Activated CD4-positive, alpha-beta T cell treated with anti-CD3 and anti-CD28 coated beads, Interleukin-2, amount 10 ng/mL, durations not matched to agents 24 days and 14 days (primary cell): ENCODE measurements at regions of chr1 and their contacts with region 1.

Region 1: DNA sequence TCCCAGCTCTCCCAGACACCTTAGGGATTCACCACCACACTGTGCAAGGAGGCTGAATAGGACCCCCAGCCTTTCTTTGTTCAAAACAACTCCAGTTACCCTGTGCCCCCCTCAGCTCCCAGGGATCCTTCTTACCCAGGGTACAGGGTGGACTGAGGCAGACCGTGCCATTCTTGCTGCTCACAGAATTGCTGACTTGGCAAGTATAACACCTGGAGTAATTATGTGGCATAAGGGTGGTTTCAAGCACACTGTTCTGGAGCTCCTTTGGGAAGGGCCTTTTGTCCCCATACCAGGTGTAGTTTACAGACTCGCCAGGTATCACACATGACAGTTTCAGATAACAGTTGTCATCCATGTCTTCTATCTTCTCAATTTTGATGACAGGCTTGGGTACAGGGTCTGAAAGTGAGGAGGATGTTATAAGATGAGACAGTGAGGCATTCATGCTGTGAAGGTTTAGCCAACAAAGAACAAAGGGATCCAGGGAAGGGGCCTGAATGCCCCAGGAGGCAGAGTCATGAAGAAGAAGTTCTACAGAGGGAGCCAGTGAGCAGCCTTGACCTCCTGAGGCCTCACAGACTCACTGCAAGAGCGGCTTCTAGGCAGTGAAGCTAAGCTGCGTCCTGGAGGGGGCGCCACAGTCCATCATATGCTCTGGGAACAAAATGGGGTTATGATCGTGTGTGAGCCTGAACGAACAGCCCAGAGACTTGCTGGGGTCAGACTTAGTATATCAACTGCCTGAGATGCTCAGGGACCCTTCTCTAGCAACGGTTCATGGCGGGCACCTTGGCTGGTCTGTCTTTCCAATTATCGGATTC is 30.3 kb downstream of the CD48 start:
- DNase-seq: peak; percentile 95
- H3K4me3 Mint-ChIP-seq: no peak overlapping the region
- H3K27ac Mint-ChIP-seq: peak overlapping the region; percentile 77
- H3K4me1 Mint-ChIP-seq: peaks cover 82% of the 10 kb centered on the region
- H3K27me3 Mint-ChIP-seq: no peaks in the 10 kb centered on the region

Region 2: DNA sequence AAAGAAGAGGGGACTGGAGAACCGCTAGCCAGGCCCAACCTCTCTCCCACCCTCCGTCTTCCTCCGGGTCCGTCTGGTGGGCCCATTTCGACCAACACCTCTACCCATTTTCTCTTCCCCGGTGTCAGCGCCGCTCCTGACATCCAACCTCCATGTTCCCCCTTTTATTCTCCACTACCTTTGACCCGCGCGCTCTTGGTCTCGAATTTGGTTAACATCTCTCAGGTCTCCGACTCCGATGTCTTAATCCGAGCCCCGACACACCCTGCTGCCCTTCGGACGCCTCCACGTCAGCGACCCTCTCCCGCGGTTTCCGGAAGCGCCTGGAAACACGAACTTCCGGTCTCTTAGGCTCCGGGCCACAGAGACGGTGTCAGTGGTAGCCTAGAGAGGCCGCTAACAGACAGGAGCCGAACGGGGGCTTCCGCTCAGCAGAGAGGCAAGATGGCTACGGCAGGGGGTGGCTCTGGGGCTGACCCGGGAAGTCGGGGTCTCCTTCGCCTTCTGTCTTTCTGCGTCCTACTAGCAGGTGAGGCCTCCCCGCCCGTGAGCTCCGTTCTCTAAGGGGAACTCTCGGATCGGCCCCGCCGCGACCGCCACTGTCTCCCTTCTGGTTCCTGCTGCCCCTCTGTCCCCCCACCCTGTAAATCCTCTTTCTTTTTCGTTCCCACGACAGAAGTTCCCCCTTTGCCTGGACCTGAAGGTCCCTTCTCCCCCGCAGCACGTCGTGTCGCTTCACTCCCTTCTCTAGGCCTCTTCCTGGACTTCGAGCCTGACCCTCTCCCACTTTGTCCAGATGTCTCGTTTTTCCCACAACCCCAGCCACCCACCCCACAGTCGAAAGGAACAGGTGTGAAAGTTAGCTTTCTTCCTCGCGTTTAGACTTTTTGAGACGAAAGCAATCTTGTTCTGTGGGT is 338.1 kb before region 1 on chr1 and contains the starts of genes COPA and NCSTN:
- intact Hi-C with region 1: loop called (anchors 5 kb)
- DNase-seq: peak; percentile 97
- H3K4me3 Mint-ChIP-seq: peak within 1 kb of the TSS; percentile 96
- H3K27ac Mint-ChIP-seq: peak within 1 kb of the TSS; percentile 97
- H3K4me1 Mint-ChIP-seq: peaks cover 41% of the 10 kb centered on the region
- H3K27me3 Mint-ChIP-seq: no peaks in the 10 kb centered on the region
- total RNA-seq, gene COPA: 116 and 125 TPM in 2 replicates
- total RNA-seq, gene NCSTN: 73.6 and 81.1 TPM in 2 replicates

Region 3: GRCh38 chr1:160726498-160727315 is 45.4 kb after region 1 on chr1:
- intact Hi-C with region 1: loop called (anchors 1 kb)
- DNase-seq: peak; percentile 90
- H3K4me3 Mint-ChIP-seq: no peak overlapping the region
- H3K27ac Mint-ChIP-seq: no peak overlapping the region
- H3K4me1 Mint-ChIP-seq: peaks cover 22% of the 10 kb centered on the region
- H3K27me3 Mint-ChIP-seq: no peaks in the 10 kb centered on the region

Region 4: DNA sequence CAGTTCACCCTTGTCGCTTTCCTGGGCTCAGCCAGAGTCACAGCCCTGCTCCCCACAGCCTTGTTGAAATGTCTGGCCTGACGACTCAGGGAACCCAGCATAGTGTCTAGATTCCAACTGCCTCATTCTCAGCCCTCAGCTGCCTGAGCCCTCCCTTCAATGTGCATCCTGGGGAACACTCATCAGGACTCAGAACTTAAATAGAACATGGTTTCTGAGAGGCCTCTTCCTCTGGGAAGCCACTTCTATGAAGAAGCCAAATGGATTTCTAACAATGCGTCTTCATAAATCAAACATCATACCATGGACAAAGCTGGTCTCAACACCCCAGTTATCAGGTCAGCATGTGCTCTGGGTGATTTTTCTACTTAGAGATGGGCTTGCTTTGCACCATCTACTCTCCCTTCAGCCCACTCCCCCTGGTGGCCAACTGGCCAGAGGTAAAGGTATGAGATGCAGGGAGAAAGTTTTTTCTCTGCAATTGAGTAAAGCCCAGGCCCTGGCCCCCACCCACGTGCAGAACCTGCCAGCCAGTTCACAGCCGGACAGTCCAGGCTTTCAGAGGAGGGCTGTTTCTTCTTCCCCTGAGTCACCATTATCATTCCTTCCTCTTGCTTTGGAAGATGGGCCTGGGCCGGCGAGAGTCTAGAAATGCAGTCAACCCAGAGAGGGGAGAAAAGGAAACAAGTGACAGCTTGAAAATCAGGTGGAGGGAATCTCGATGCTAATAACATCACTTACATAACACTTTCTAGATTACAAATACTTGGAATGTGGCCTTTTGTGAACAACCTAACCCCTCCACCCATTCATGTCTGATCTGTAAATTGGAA is 149.3 kb after region 1 on chr1:
- intact Hi-C with region 1: loop called (anchors 2 kb)
- DNase-seq: peak; percentile 93
- H3K4me3 Mint-ChIP-seq: no peak overlapping the region
- H3K27ac Mint-ChIP-seq: peak overlapping the region; percentile 22
- H3K4me1 Mint-ChIP-seq: peaks cover 13% of the 10 kb centered on the region
- H3K27me3 Mint-ChIP-seq: no peaks in the 10 kb centered on the region

Region 5: DNA sequence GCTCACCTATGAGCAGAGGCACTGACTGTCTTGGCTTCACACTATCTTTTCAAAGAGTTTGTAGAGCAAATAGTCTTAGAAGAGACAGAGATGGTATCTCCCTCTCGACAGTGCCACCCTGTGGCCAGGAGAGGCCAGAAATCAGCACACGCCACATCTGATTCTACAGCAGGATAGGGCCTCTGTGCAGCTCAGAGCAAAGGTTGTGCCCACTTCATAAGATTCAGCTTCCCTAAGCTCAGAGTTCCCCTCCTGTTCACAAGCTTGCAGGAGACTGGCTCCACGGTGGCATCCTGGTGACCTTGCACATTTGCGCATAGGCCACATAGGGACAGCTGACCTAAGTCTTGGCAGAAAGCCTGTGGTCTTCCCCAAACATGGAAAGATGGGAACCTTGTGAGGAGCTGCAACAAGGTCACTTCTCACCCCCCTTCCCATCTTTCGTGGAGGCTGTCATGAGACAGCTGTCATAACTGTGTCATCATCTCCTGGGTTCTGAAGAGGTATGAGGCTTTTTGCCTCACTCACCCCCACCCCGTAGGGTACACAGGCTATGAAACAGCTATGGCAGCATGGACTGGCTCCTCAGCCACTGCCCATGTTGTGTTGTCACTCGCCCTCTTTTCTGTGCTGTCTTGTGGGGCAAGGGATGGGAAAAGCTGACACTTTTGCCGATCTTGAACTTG is 270.3 kb after region 1 on chr1:
- intact Hi-C with region 1: loop called (anchors 2 kb)
- DNase-seq: peak; percentile 91
- H3K4me3 Mint-ChIP-seq: no peak overlapping the region
- H3K27ac Mint-ChIP-seq: no peak overlapping the region
- H3K4me1 Mint-ChIP-seq: peaks cover 6% of the 10 kb centered on the region
- H3K27me3 Mint-ChIP-seq: peaks cover 9% of the 10 kb centered on the region